Ascending aorta (tissue), 2 donors: ENCODE measurements at regions of chr1 and their contacts with region 1.

Region 1: DNA sequence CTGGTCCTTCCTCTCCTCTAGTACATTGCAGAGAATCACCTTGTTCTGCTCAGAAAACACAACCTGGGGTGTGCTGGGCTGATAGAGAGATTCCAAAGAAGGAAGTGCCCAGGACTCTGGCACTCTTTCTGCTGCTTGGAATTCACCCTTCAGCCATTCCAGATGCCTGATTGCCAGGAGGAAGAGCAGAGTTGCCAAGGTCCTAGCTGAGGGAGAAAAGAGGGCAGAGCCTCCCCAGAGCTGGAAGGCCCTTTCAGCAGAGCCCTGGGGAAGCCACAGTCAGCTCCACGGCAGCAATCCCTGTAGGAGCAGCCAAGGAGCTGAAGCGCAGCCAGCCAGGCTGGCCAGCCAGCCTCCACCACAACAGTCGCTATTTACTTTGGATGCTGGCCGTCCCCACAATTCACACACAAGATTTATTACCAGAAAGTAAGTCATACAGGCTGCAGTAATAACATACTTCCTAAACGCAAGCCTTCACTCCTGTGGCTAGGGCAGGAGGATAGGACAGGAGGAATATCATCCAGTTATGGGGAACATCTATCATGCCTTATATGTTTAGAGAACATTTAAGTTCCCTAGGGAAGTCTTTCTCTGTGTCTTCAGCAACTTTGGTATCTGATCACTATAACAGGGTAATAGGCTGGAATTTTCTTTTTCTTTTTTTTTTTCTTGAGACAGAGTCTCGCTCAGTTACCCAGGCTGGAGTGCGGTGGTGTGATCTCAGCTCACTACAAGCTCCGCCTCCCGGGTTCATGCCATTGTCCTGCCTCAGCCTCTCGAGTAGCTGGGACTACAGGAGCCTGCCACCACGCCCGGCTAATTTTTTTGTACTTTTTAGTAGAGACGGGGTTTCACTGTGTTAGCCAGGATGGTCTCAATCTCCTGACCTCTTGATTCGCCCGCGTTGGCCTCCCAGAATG is 36.6 kb upstream of the SLC44A3 start:
- DNase-seq: peak; percentile 66 to 96
- H3K4me3 ChIP-seq: peak overlapping the region in 1 of 2 donors; percentile 54
- H3K27ac ChIP-seq: peak overlapping the region; percentile 85 to 96
- H3K4me1 ChIP-seq: peaks cover 2 to 15% of the 10 kb centered on the region in 2 donors
- H3K27me3 ChIP-seq: no peaks in the 10 kb centered on the region
- CTCF ChIP-seq: no peak

Region 2: DNA sequence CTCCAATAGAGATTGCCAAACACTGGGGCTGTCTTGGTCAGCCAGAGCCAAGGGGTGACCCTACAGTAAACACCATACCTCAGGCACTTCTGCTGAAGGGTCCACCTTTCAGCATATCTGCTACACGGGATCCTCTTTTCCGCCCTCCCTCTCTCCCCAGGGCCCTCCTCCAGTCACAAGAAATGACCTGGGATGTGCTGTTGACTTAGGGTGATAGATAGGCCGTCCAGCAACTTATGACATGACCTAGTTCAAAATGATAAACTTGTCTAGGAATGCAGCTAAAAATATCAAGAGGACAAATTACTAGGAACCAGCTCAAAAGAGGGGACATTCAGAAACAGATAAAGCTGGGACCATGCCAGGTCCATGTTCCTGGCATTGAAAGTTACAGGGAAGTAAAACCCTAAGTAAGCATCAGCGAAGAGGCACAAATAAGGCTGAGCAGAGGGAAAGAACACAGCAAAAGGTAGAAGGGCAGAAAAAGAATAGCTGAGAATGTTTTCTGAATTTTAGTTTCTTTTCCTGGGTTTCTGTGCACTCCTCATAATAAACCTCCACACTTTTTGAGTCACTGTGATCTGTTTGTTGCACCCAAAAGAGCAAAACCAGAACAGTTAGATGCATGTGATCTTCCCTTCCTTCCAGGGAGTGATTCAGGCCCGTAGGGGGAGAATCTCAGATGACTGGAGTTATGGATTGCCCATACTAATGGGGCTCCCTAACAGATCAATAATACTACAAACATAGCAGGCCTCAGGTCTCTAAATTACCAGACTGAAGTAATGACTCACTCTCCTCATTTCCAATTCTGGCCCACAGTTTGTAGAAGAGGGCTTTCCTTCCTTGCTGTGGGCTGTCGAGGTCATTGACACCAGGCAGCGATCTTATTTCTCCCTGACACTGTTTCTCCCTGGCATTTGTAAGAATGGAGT is 193.1 kb before region 1 on chr1:
- intact Hi-C with region 1: no loop called
- DNase-seq: no peak
- H3K4me3 ChIP-seq: no peak overlapping the region
- H3K27ac ChIP-seq: peak overlapping the region; percentile 27 to 78
- H3K4me1 ChIP-seq: peaks cover 5 to 12% of the 10 kb centered on the region in 2 donors
- H3K27me3 ChIP-seq: no peaks in the 10 kb centered on the region
- CTCF ChIP-seq: no peak

Region 3: GRCh38 chr1:94654031-94654430 is 129.6 kb before region 1 on chr1:
- intact Hi-C with region 1: loop called (anchors 10 kb)
- DNase-seq: no peak
- H3K4me3 ChIP-seq: no peak overlapping the region
- H3K27ac ChIP-seq: peak overlapping the region in 1 of 2 donors; percentile 37
- H3K4me1 ChIP-seq: peaks cover 0 to 7% of the 10 kb centered on the region in 2 donors
- H3K27me3 ChIP-seq: no peaks in the 10 kb centered on the region
- CTCF ChIP-seq: no peak

Region 4: GRCh38 chr1:94727846-94728715 is 55.5 kb before region 1 on chr1:
- intact Hi-C with region 1: loop called (anchors 2 kb)
- DNase-seq: peak in 1 of 2 donors; percentile 78
- H3K4me3 ChIP-seq: no peak overlapping the region
- H3K27ac ChIP-seq: no peak overlapping the region
- H3K4me1 ChIP-seq: peaks cover 0 to 8% of the 10 kb centered on the region in 2 donors
- H3K27me3 ChIP-seq: no peaks in the 10 kb centered on the region
- CTCF ChIP-seq: no peak

Region 5: DNA sequence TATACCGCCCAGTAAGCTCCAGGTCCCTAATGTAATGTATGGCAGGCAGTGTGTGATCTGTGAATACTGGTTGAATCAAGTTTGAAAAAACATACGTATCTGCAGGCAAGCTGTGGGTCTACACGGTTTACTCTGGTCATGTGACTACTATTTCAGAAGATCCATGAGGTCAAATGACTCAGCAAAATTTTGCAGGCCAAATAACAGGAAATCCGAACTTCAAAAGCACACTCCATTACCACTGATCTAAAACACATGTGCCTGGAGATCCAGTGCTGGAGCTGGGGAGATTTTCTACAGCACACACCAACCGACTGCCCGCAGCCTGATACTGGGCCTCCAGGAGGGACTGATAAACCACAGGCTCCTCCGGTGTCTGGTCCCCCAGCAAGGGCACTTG is 27.9 kb before region 1 on chr1:
- intact Hi-C with region 1: no loop called
- DNase-seq: no peak
- H3K4me3 ChIP-seq: no peak overlapping the region
- H3K27ac ChIP-seq: no peak overlapping the region
- H3K4me1 ChIP-seq: peaks cover 0 to 12% of the 10 kb centered on the region in 2 donors
- H3K27me3 ChIP-seq: no peaks in the 10 kb centered on the region
- CTCF ChIP-seq: no peak

Region 6: GRCh38 chr1:94903280-94904009 is 119.8 kb after region 1 on chr1:
- intact Hi-C with region 1: no loop called
- DNase-seq: no peak
- H3K4me3 ChIP-seq: no peak overlapping the region
- H3K27ac ChIP-seq: peak overlapping the region; percentile 27 to 31
- H3K4me1 ChIP-seq: peaks cover 4 to 50% of the 10 kb centered on the region in 2 donors
- H3K27me3 ChIP-seq: no peaks in the 10 kb centered on the region
- CTCF ChIP-seq: no peak